ENCODE measurements at regions of chr5 and their contacts with region 1.

Region 1: GRCh38 chr5:100634937-100635534 is 99.9 kb downstream of the FAM174A start:
- DNase-seq: no peak
- ATAC-seq: no peak
- H3K4me3 ChIP-seq: no peak overlapping the region
- H3K4me3 Mint-ChIP-seq: no peak overlapping the region
- H3K27ac ChIP-seq: no peak overlapping the region
- H3K27ac Mint-ChIP-seq: no peak overlapping the region
- H3K4me1 ChIP-seq: no peaks in the 10 kb centered on the region
- H3K4me1 Mint-ChIP-seq: no peaks in the 10 kb centered on the region
- H3K27me3 ChIP-seq: no peaks in the 10 kb centered on the region
- H3K27me3 Mint-ChIP-seq: no peaks in the 10 kb centered on the region
- CTCF ChIP-seq: no peak

Region 2: DNA sequence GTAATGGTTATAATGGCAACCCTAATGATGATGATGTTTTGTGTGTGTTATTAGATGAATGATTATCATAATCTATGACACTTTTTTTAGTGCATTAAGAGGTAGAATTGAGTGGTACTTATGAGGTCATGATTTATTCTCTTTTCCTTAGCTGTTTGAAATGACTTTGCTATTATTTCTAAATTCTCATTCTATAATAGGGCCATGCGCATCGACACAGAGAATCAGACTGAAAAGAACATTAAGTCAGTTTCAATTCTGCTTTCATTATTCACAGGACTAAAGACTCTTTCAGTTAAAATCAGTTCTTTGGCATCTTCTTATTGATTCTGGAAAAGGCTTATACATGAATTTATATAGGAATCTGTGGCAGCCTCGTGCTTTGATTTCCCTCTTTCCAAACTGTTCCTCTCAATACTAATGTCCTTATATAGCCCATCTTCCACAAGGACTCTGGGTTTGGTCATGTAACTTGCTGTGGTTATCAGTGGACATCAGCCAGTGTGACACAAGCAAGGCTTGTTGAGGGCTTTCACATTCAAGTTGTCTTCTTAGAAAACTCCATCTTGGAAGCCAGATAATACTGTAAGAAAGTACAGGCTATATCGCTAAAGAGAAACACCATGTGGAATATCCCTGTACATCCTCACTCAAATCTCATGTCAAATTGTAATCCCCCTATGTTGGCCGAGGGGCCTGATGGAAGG is 1565.9 kb before region 1 on chr5:
- CTCF ChIA-PET with region 1: no interaction called
- POLR2A ChIA-PET with region 1: no interaction called
- intact Hi-C with region 1: no loop called
- DNase-seq: no peak
- ATAC-seq: no peak
- H3K4me3 ChIP-seq: no peak overlapping the region
- H3K4me3 Mint-ChIP-seq: no peak overlapping the region
- H3K27ac ChIP-seq: no peak overlapping the region
- H3K27ac Mint-ChIP-seq: no peak overlapping the region
- H3K4me1 ChIP-seq: no peaks in the 10 kb centered on the region
- H3K4me1 Mint-ChIP-seq: no peaks in the 10 kb centered on the region
- H3K27me3 ChIP-seq: no peaks in the 10 kb centered on the region
- H3K27me3 Mint-ChIP-seq: no peaks in the 10 kb centered on the region
- CTCF ChIP-seq: no peak

Region 3: GRCh38 chr5:100623719-100624118 is 11.3 kb before region 1 on chr5:
- CTCF ChIA-PET with region 1: no interaction called
- POLR2A ChIA-PET with region 1: no interaction called
- intact Hi-C with region 1: no loop called
- DNase-seq: peak in 3 of 14 experiments; percentile 52 to 57 (median 56)
- ATAC-seq: no peak
- H3K4me3 ChIP-seq: no peak overlapping the region
- H3K4me3 Mint-ChIP-seq: no peak overlapping the region
- H3K27ac ChIP-seq: no peak overlapping the region
- H3K27ac Mint-ChIP-seq: no peak overlapping the region
- H3K4me1 ChIP-seq: no peaks in the 10 kb centered on the region
- H3K4me1 Mint-ChIP-seq: no peaks in the 10 kb centered on the region
- H3K27me3 ChIP-seq: no peaks in the 10 kb centered on the region
- H3K27me3 Mint-ChIP-seq: no peaks in the 10 kb centered on the region
- CTCF ChIP-seq: peak; percentile 67

Region 4: GRCh38 chr5:100667161-100667630 is 32.2 kb after region 1 on chr5:
- CTCF ChIA-PET with region 1: no interaction called
- POLR2A ChIA-PET with region 1: no interaction called
- intact Hi-C with region 1: loop called in 1 of 2 experiments (anchors 1 kb)
- DNase-seq: peak in 3 of 14 experiments; percentile 56 to 82 (median 57)
- ATAC-seq: peak; percentile 73
- H3K4me3 ChIP-seq: no peak overlapping the region
- H3K4me3 Mint-ChIP-seq: no peak overlapping the region
- H3K27ac ChIP-seq: no peak overlapping the region
- H3K27ac Mint-ChIP-seq: no peak overlapping the region
- H3K4me1 ChIP-seq: peaks cover 3% of the 10 kb centered on the region
- H3K4me1 Mint-ChIP-seq: peaks cover 10% of the 10 kb centered on the region
- H3K27me3 ChIP-seq: no peaks in the 10 kb centered on the region
- H3K27me3 Mint-ChIP-seq: no peaks in the 10 kb centered on the region
- CTCF ChIP-seq: no peak

Measured in CD4-positive, alpha-beta T cell (primary cell).